Activated naive CD4-positive, alpha-beta T cell treated with anti-CD3 and anti-CD28 coated beads, Interleukin-2, amount 10 ng/mL, durations not matched to agents 7 days and 5 days (primary cell): ENCODE measurements at regions of chr9 and their contacts with region 1.

Region 1: DNA sequence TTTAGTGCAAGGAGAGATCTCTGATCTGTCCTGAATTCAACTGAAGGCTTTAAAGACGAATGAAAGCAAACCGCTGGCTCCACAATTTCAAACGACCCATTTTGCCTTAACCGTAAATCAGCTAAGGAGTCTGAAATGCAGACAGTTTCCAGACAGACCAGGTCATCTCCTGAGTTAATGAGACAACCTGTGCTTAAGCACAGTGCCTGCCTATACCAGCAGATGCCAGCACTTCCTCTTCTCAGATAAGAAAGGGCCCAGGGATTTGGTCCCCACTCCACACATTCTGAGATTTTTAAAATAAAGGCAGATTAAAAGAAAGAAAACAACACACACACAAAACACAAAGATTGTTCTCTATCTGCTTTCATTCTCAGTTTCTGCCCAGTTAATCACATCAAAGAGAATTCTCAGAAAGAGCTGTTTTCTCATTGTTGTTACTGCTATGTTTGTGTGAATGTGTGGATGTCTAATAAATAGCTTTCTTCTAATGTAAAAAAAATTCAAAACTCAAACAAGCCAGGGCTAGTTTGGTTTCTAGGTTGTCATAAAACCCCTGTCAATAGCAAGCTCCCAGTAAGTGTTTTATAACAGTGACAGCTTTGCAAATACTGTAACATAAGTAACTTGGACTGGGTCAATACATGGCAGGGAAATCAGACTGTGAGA is 157.7 kb upstream of the SLC24A2 start:
- DNase-seq: peak; percentile 60
- H3K4me3 Mint-ChIP-seq: no peak overlapping the region
- H3K27ac Mint-ChIP-seq: peak overlapping the region; percentile 86
- H3K4me1 Mint-ChIP-seq: peaks cover 44% of the 10 kb centered on the region
- H3K27me3 Mint-ChIP-seq: no peaks in the 10 kb centered on the region

Region 2: DNA sequence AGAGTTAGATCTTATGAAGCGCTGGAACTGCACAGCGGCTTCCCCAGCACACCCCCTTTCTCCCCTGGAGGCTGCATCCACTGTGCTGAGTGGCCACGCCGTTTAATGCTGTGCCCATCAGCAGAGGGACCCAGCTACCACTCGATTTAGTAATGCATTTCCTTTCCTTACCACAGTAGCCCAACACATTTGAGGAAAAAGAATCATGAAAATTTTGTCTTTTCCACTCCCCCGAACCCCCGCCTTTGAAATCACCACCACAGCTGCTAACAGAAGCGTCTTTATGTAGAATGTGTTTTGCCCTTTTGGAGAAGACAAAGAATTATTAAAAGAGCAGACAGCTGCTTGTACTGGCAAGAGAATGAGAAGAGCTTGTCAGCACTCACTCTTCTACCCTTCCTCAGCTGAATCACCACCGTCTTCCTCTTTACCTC is 464.6 kb before region 1 on chr9:
- CTCF ChIA-PET with region 1: no interaction called
- DNase-seq: no peak
- H3K4me3 Mint-ChIP-seq: no peak overlapping the region
- H3K27ac Mint-ChIP-seq: no peak overlapping the region
- H3K4me1 Mint-ChIP-seq: no peaks in the 10 kb centered on the region
- H3K27me3 Mint-ChIP-seq: peaks cover 33% of the 10 kb centered on the region

Region 3: DNA sequence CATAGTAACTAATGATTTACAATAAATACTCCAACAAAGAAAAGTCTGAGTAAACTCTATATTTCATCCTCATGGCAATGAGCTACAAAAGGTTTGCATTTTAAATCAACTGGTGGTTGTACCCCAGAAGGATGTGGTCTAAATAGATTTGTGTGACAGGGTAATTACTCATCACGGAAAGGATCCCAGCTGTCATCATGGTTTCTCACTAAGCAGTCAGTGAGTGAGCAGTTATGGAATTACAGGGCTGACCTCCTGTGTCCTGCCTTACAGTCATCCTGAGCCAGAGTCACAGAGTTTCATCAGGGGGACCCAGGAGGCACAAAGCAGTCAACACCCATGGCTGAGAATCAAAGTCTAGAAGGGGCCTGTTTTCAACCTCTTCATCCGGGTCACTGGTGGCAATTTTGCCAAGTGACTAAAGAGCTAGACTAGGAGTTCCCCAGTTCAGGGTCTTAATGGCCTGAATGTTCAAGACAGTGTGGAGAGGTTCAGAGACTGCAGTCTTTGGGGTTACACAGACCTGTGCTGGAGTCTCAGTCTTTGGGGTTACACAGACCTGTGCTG is 53.0 kb after region 1 on chr9:
- CTCF ChIA-PET with region 1: interaction called, 10 read pairs
- DNase-seq: peak; percentile 46
- H3K4me3 Mint-ChIP-seq: no peak overlapping the region
- H3K27ac Mint-ChIP-seq: peak overlapping the region; percentile 87
- H3K4me1 Mint-ChIP-seq: peaks cover 45% of the 10 kb centered on the region
- H3K27me3 Mint-ChIP-seq: no peaks in the 10 kb centered on the region

Region 4: GRCh38 chr9:20095430-20096092 is 149.0 kb after region 1 on chr9:
- CTCF ChIA-PET with region 1: no interaction called
- DNase-seq: no peak
- H3K4me3 Mint-ChIP-seq: no peak overlapping the region
- H3K27ac Mint-ChIP-seq: no peak overlapping the region
- H3K4me1 Mint-ChIP-seq: no peaks in the 10 kb centered on the region
- H3K27me3 Mint-ChIP-seq: no peaks in the 10 kb centered on the region

Region 5: GRCh38 chr9:20197976-20198685 is 251.6 kb after region 1 on chr9:
- CTCF ChIA-PET with region 1: no interaction called
- DNase-seq: no peak
- H3K4me3 Mint-ChIP-seq: no peak overlapping the region
- H3K27ac Mint-ChIP-seq: peak overlapping the region; percentile 38
- H3K4me1 Mint-ChIP-seq: peaks cover 44% of the 10 kb centered on the region
- H3K27me3 Mint-ChIP-seq: no peaks in the 10 kb centered on the region